Right cardiac atrium (tissue), 5 donors: ENCODE measurements at regions of chr7 and their contacts with region 1.

Region 1: GRCh38 chr7:55593515-55594318 is 21.4 kb upstream of the VOPP1 start:
- DNase-seq: peak; percentile 64 to 83 (median 83)
- ATAC-seq: peak; percentile 43 to 71
- H3K4me3 ChIP-seq: no peak overlapping the region
- H3K27ac ChIP-seq: no peak overlapping the region
- H3K4me1 ChIP-seq: no peaks in the 10 kb centered on the region
- H3K27me3 ChIP-seq: no peaks in the 10 kb centered on the region

Region 2: DNA sequence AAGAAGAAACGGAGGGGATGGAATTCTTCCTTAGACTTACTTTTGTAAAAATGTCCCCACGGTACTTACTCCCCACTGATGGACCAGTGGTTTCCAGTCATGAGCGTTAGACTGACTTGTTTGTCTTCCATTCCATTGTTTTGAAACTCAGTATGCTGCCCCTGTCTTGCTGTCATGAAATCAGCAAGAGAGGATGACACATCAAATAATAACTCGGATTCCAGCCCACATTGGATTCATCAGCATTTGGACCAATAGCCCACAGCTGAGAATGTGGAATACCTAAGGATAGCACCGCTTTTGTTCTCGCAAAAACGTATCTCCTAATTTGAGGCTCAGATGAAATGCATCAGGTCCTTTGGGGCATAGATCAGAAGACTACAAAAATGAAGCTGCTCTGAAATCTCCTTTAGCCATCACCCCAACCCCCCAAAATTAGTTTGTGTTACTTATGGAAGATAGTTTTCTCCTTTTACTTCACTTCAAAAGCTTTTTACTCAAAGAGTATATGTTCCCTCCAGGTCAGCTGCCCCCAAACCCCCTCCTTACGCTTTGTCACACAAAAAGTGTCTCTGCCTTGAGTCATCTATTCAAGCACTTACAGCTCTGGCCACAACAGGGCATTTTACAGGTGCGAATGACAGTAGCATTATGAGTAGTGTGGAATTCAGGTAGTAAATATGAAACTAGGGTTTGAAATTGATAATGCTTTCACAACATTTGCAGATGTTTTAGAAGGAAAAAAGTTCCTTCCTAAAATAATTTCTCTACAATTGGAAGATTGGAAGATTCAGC is 387.3 kb before region 1 on chr7:
- intact Hi-C with region 1: no loop called
- DNase-seq: no peak
- ATAC-seq: no peak
- H3K4me3 ChIP-seq: no peak overlapping the region
- H3K27ac ChIP-seq: no peak overlapping the region
- H3K4me1 ChIP-seq: no peaks in the 10 kb centered on the region
- H3K27me3 ChIP-seq: no peaks in the 10 kb centered on the region

Region 3: GRCh38 chr7:55255496-55256435 is 338.0 kb before region 1 on chr7:
- intact Hi-C with region 1: no loop called
- DNase-seq: peak; percentile 86 to 94 (median 93)
- ATAC-seq: peak; percentile 95 to 96
- H3K4me3 ChIP-seq: peak overlapping the region; percentile 44
- H3K27ac ChIP-seq: no peak overlapping the region
- H3K4me1 ChIP-seq: no peaks in the 10 kb centered on the region
- H3K27me3 ChIP-seq: no peaks in the 10 kb centered on the region

Region 4: DNA sequence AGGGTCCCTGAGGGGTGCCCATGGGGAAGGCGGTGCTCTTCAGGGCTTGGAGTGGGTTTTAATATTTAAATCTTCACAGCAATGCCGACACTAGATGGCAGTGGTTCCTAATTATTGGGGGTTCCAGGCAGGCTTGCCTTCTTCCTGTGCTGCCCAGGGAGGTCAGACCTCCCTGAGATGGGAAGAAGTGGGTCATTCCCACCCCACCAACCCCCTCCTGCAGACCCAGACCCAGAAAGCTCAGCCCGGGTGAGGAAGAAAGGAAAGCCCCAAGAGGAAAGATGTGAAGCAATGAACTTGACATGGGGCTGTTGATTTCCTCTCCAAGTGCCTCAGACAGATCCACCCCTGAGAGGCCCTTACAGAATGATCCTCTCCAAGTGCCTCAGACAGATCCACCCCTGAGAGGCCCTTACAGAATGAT is 313.7 kb before region 1 on chr7:
- intact Hi-C with region 1: loop called in 1 of 4 experiments (anchors 10 kb)
- DNase-seq: peak in 2 of 3 donors; percentile 43 to 57
- ATAC-seq: peak; percentile 81 to 88
- H3K4me3 ChIP-seq: no peak overlapping the region
- H3K27ac ChIP-seq: no peak overlapping the region
- H3K4me1 ChIP-seq: no peaks in the 10 kb centered on the region
- H3K27me3 ChIP-seq: no peaks in the 10 kb centered on the region

Region 5: GRCh38 chr7:55432939-55433784 is 160.6 kb before region 1 on chr7:
- intact Hi-C with region 1: loop called in 3 of 4 experiments (anchors 5 to 10 kb)
- DNase-seq: no peak
- ATAC-seq: peak; percentile 40 to 55
- H3K4me3 ChIP-seq: no peak overlapping the region
- H3K27ac ChIP-seq: no peak overlapping the region
- H3K4me1 ChIP-seq: no peaks in the 10 kb centered on the region
- H3K27me3 ChIP-seq: no peaks in the 10 kb centered on the region

Region 6: DNA sequence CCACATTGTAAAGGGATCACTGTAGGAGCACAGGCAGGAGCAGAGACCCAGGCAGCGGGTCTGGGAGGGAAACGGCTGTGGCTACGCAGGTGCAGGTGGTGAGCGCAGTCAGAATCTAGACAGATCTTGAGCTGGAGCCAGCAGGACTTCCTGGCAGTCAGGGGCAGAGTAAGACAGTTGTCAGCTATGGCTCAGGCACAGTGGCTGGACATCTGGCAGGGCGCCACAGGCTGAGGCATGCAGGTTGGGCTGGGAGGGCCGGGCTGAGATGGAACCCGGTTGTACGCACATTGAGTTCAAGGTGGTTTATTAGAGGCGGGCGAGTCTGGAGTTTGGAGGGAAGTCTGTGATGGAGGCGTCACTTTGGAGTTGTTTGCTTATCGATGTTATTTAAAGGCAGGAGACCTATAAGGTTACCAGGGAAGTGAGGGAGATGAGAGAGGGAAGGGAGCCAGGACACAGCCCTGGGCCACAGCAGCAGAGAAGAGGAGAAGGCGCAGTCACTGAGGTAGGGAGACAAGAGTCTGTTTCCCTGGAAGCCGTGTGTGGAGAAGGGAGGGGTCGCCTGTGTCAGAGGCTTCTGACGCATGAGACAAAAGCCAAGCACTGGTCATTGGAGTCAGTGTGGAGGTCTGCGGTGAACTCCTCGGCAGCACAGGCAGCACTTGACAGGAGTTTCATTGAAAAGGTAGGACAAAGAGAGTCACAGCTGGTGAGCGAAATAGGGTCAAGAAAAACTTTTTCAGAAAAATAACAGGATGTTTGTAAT is 154.8 kb before region 1 on chr7:
- intact Hi-C with region 1: loop called in 3 of 4 experiments (anchors 5 to 10 kb)
- DNase-seq: peak; percentile 50 to 79 (median 73)
- ATAC-seq: peak; percentile 46 to 63
- H3K4me3 ChIP-seq: no peak overlapping the region
- H3K27ac ChIP-seq: no peak overlapping the region
- H3K4me1 ChIP-seq: no peaks in the 10 kb centered on the region
- H3K27me3 ChIP-seq: no peaks in the 10 kb centered on the region